HEK293 (cell line): ENCODE measurements at regions of chr2 and their contacts with region 1.

Region 1: DNA sequence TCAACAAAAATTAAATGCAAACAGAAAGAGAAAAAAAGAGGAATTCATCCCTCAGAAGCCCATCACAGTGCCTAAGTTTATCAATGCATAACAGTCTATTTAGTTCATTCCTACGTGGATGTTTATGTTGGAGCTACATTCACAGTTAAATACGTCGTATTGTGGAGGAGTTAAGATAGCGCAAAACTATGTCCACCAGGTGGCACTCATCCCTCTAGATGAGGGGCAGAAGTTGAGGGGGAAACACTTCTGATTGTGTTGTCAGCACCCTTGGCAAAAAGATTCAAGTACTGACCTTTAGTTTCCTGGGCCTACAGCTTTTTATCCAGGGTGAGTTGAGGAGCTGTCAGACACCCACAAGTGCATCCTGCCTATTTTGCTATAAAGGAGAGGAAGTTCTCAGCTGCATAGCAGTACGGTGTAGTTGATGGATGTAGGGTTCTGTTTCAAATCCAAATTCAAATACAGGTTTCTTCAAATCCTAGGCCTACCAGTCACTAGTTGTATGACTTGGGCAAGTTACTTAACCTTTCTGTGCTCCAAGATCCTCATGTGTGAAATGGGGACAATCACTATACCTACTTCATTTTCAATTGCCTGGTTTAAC is 26.8 kb upstream of the MYO1B start:
- H3K4me3 ChIP-seq: no peak overlapping the region
- H3K27ac ChIP-seq: no peak overlapping the region
- H3K4me1 ChIP-seq: no peaks in the 10 kb centered on the region
- CTCF ChIP-seq: peak; percentile 73

Region 2: DNA sequence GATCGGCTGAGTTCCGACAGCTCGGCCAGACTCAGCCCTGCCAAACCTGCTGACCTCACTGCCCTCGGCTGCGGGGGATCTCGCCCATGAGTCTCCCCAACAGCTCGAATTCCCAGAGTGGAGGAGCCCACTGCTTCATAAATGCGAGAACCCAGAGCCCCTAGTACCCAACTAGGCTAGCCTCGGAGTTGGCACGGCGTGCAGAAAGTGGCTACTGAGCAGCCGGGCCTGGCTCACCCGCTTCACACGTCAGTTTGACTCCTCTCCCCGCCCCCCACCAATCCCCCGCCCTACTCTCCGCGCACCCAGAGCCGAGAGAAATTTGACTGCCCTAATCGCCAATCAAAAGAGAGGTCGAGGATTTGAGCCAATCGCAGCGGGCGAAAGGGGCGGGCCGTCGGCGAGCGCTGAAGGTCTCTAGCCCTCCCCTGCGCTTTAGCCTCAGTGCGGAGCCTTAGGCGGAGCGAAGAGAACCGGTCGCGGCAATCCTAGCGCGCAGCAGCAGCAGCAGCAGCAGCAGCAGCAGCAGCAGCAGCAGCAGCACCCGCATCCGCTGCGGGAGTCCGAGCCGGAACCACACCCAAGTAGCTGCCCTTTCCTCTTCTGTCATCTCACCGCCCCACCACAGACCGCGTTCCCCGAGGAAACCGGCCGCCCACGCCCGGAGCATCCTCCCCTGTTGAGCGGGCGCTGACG is 337.9 kb before region 1 on chr2 and contains the start of gene GLS:
- CTCF ChIA-PET with region 1: no interaction called
- POLR2A ChIA-PET with region 1: no interaction called
- H3K4me3 ChIP-seq: peak within 1 kb of the TSS; percentile 94
- H3K27ac ChIP-seq: peak within 1 kb of the TSS; percentile 91
- H3K4me1 ChIP-seq: peaks cover 2% of the 10 kb centered on the region; the same call in 1 of the 2 replicates
- CTCF ChIP-seq: peak; percentile 29; the same call in 1 of the 2 replicates

Region 3: DNA sequence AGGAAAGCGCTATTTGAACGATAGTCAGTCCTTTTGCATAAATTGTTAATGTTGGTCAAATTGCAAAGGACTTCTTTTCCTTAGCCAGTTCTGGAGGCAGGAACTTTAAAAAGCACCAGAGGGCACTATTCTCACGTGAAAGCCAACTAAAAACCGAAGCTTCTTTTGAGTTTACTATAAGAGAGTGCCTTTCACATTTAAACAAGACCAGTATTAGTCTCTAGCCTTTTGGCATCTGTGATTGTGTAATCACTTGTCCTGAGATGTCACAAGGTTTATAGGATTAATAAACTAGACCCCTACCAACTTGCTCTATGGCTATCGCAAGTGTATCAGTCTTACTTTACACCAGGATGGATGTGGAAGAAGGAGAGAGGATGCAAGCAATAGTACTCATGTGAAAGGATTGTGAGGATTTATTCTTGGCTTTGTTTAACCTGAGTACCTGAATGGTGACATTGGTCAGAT is 53.2 kb before region 1 on chr2:
- CTCF ChIA-PET with region 1: interaction called, 30 read pairs
- POLR2A ChIA-PET with region 1: no interaction called
- H3K4me3 ChIP-seq: no peak overlapping the region
- H3K27ac ChIP-seq: no peak overlapping the region
- H3K4me1 ChIP-seq: peaks cover 10% of the 10 kb centered on the region; the same call in 1 of the 2 replicates
- CTCF ChIP-seq: no peak